ENCODE measurements at regions of chr6 and their contacts with region 1.

Region 1: DNA sequence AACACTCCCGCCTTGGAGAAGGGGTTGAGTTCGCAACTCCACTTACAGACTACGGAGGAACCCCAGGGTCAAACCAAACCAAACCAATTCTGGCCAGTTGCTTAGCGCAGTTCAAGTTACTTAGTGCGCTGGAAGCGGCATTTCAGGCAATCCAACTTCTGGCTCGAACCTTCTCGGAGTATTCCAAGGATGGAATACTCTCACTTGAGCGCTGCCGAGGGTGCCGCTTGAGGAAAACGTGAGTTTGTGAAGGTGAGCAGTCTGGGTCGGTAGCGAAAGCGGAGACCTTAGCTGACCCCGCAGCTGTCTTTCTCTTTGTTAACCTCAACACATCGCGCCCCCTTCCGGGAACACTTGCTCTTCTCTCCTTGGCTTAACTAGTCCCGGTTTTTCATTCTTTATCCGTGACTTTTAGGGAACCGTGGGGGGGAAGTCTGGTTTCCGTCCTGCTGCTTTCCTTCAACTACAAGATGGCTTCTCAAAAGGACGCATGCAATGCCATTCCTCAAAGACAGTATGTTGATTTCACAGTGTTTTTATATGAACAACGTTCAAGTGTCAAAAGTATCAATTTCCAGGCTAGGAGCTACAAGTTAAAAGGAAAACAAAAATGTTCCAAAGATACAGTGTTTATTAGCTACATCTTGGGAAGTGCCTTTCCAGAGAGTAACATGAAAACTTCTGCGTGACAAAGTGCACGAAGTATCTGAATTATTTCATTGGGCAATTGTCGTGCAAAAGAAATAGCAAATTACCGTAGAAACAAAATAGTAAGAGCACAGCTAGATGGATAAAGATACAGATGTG is 742 bp upstream of the PNISR start:
- DNase-seq: peak; percentile 33 to 92
- H3K4me3 ChIP-seq: peak overlapping the region; percentile 84 to 89
- H3K27ac ChIP-seq: peak overlapping the region; percentile 98 to 99
- H3K4me1 ChIP-seq: peaks cover 5 to 34% of the 10 kb centered on the region in 2 donors
- H3K27me3 ChIP-seq: no peaks in the 10 kb centered on the region
- CTCF ChIP-seq: peak in 2 of 3 experiments; percentile 18 to 43

Region 2: GRCh38 chr6:98947351-98948292 is 478.2 kb before region 1 on chr6 and contains the start of gene FBXL4:
- intact Hi-C with region 1: loop called (anchors 10 kb)
- DNase-seq: peak; percentile 26 to 88
- H3K4me3 ChIP-seq: peak within 1 kb of the TSS; percentile 94 to 100
- H3K27ac ChIP-seq: peak within 1 kb of the TSS; percentile 74 to 94
- H3K4me1 ChIP-seq: peaks cover 5 to 6% of the 10 kb centered on the region in 2 donors
- H3K27me3 ChIP-seq: no peaks in the 10 kb centered on the region
- CTCF ChIP-seq: no peak
- total RNA-seq, gene FBXL4: 9.4 TPM

Region 3: DNA sequence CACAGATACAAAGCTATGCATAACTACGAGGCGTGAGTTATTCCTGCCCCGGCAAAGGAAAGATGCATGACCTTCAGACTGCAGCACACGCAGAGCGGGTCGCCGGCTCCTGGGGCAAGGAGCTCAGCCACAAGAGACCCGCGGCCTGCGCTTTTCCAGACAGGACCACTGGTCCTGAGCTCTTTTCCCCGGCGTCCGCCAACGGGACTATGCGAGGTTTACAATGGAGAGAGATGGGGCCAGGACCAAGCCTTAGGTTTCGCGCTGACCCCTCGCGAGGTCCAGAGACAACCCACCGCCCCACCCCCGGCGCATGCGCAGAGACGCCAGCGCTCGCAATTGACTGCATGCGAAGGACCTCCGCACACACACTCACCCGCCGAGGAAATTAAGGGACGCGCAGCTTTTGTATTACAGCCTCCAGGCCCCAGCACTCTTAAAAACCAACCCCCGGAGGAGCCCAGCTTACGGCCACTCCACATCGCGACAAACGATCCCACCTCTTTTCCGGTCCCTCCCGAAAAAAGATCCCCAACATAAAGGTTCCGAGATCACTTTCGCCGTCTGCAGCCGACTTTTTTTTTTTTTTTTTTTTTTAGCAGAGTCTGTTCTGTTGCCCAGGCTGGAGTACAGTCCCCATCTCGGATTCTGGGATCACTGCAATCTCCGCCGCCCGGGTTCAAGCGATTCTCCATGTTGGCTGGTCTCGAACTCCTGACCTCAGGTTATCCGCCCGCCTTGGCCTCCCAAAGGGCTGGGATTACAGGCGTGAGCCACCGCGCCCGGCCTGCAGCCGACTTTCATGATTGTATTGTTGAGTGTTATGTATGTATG is 31.9 kb before region 1 on chr6 and contains the start of gene COQ3:
- intact Hi-C with region 1: loop called (anchors 5 kb)
- DNase-seq: peak in 1 of 2 donors; percentile 79
- H3K4me3 ChIP-seq: peak within 1 kb of the TSS; percentile 76 to 98
- H3K27ac ChIP-seq: peak within 1 kb of the TSS; percentile 82 to 92
- H3K4me1 ChIP-seq: no peaks in the 10 kb centered on the region
- H3K27me3 ChIP-seq: no peaks in the 10 kb centered on the region
- CTCF ChIP-seq: no peak
- total RNA-seq, gene COQ3: 1.7 TPM

Region 4: GRCh38 chr6:99514089-99514488 is 88.2 kb after region 1 on chr6:
- intact Hi-C with region 1: loop called (anchors 1 kb)
- DNase-seq: no peak
- H3K4me3 ChIP-seq: peak overlapping the region; percentile 72 to 93
- H3K27ac ChIP-seq: no peak overlapping the region
- H3K4me1 ChIP-seq: peaks cover 0 to 8% of the 10 kb centered on the region in 2 donors
- H3K27me3 ChIP-seq: no peaks in the 10 kb centered on the region
- CTCF ChIP-seq: no peak

Region 5: GRCh38 chr6:99568103-99568933 is 142.5 kb after region 1 on chr6 and contains the start of gene CCNC:
- intact Hi-C with region 1: loop called (anchors 1 kb)
- DNase-seq: peak; percentile 83 to 97
- H3K4me3 ChIP-seq: peak within 1 kb of the TSS; percentile 76 to 84
- H3K27ac ChIP-seq: peak within 1 kb of the TSS; percentile 58 to 78
- H3K4me1 ChIP-seq: peaks cover 0 to 12% of the 10 kb centered on the region in 2 donors
- H3K27me3 ChIP-seq: no peaks in the 10 kb centered on the region
- CTCF ChIP-seq: no peak
- total RNA-seq, gene CCNC: 29.9 TPM